AG04450 (cell line): ENCODE measurements at regions of chr16 and their contacts with region 1.

Region 1: DNA sequence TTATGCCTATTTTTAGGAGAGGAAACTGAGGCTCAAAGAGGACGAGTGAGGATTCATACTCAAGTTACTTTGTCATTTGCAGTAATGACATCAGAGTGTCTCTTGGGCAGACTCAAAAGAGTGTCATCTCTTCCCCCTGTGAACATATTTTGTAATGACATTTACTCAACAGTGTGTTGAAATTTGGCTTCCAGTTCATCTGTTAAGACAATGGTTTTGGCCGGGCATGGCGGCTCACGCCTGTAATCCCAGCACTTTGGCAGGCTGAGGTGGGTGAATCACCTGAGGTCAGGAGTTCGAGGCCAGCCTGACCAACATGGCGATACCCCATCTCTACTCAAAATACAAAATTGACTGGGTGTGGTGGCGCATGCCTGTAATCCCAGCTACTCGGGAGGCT is 28.9 kb downstream of the WFDC1 start:
- DNase-seq: no peak
- H3K4me3 ChIP-seq: no peak overlapping the region
- H3K27ac ChIP-seq: no peak overlapping the region
- H3K27me3 ChIP-seq: peaks cover 9% of the 10 kb centered on the region
- CTCF ChIP-seq: no peak

Region 2: DNA sequence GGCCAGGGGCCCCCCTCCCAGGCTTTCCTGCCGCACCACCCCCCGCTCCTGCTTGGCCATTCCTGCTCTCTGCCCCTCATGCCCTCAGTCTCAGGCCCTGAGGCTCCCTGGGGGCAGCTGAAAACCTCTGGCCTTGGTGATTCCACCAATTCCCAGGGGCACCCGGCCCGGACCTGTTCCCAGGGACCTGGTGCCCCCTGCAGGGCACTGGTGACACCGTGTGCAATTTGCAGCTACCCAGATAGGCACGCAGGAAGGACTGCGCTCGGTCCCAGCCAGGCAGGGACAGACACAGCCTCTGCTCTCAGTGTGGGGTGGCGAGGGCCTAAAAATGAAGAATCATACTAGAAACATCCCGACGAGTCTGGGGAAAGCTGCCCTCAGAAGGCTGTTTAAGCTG is 15.5 kb before region 1 on chr16:
- CTCF ChIA-PET with region 1: interaction called, 15 read pairs
- POLR2A ChIA-PET with region 1: no interaction called
- DNase-seq: peak; percentile 11
- H3K4me3 ChIP-seq: no peak overlapping the region
- H3K27ac ChIP-seq: no peak overlapping the region
- H3K27me3 ChIP-seq: peaks cover 8% of the 10 kb centered on the region
- CTCF ChIP-seq: peak; percentile 62